ENCODE measurements at regions of chr13 and their contacts with region 1.

Region 1: DNA sequence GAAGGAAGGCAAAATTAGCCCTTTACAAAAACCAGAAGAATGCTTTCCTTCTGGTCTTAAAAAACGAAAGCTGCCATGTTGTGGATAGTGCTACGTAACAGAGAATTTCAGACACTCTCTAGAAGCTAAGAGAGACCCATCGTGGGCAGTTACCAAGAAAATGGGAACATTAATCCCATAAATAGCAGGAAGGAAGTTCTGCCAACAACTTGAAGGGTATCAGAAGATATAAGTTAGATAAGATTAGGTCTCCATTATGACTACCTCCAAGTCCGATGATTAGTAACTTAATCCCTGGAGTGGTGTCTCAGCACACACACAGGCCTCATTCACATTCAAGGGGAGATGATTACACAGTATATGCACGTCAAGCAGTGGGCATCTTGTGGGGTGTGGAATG is 115.7 kb upstream of the TRPC4 start:
- DNase-seq: no peak
- H3K4me3 ChIP-seq: no peak overlapping the region
- H3K4me3 Mint-ChIP-seq: no peak overlapping the region
- H3K27ac Mint-ChIP-seq: no peak overlapping the region
- H3K4me1 ChIP-seq: no peaks in the 10 kb centered on the region
- H3K4me1 Mint-ChIP-seq: no peaks in the 10 kb centered on the region
- H3K27me3 ChIP-seq: no peaks in the 10 kb centered on the region
- H3K27me3 Mint-ChIP-seq: no peaks in the 10 kb centered on the region
- CTCF ChIP-seq: no peak

Region 2: GRCh38 chr13:38024431-38024830 is 39.1 kb after region 1 on chr13:
- CTCF ChIA-PET with region 1: no interaction called
- POLR2A ChIA-PET with region 1: no interaction called
- intact Hi-C with region 1: loop called (anchors 1 kb)
- DNase-seq: no peak
- H3K4me3 ChIP-seq: no peak overlapping the region
- H3K4me3 Mint-ChIP-seq: no peak overlapping the region
- H3K27ac Mint-ChIP-seq: no peak overlapping the region
- H3K4me1 ChIP-seq: no peaks in the 10 kb centered on the region
- H3K4me1 Mint-ChIP-seq: no peaks in the 10 kb centered on the region
- H3K27me3 ChIP-seq: no peaks in the 10 kb centered on the region
- H3K27me3 Mint-ChIP-seq: no peaks in the 10 kb centered on the region
- CTCF ChIP-seq: no peak

Measured in Caco-2 (cell line).